B cell (primary cell): ENCODE measurements at regions of chr1 and their contacts with region 1.

Region 1: GRCh38 chr1:30801771-30802198 is 44.2 kb upstream of the LAPTM5 start:
- DNase-seq: peak; percentile 82
- ATAC-seq: peak; percentile 68
- H3K4me3 ChIP-seq: no peak overlapping the region
- H3K4me3 Mint-ChIP-seq: no peak overlapping the region
- H3K27ac ChIP-seq: no peak overlapping the region
- H3K27ac Mint-ChIP-seq: no peak overlapping the region
- H3K4me1 ChIP-seq: peaks cover 10 to 13% of the 10 kb centered on the region in 2 donors
- H3K4me1 Mint-ChIP-seq: peaks cover 14% of the 10 kb centered on the region
- H3K27me3 ChIP-seq: peaks cover 0 to 42% (median 10%) of the 10 kb centered on the region in 4 experiments
- H3K27me3 Mint-ChIP-seq: peaks cover 26% of the 10 kb centered on the region
- CTCF ChIP-seq: peak; percentile 97

Region 2: GRCh38 chr1:30336550-30337323 is 465.0 kb before region 1 on chr1:
- CTCF ChIA-PET with region 1: no interaction called
- POLR2A ChIA-PET with region 1: no interaction called
- intact Hi-C with region 1: no loop called
- DNase-seq: no peak
- ATAC-seq: no peak
- H3K4me3 ChIP-seq: no peak overlapping the region
- H3K4me3 Mint-ChIP-seq: no peak overlapping the region
- H3K27ac ChIP-seq: no peak overlapping the region
- H3K27ac Mint-ChIP-seq: no peak overlapping the region
- H3K4me1 ChIP-seq: no peaks in the 10 kb centered on the region
- H3K4me1 Mint-ChIP-seq: no peaks in the 10 kb centered on the region
- H3K27me3 ChIP-seq: no peaks in the 10 kb centered on the region
- H3K27me3 Mint-ChIP-seq: peaks cover 10% of the 10 kb centered on the region
- CTCF ChIP-seq: no peak

Region 3: DNA sequence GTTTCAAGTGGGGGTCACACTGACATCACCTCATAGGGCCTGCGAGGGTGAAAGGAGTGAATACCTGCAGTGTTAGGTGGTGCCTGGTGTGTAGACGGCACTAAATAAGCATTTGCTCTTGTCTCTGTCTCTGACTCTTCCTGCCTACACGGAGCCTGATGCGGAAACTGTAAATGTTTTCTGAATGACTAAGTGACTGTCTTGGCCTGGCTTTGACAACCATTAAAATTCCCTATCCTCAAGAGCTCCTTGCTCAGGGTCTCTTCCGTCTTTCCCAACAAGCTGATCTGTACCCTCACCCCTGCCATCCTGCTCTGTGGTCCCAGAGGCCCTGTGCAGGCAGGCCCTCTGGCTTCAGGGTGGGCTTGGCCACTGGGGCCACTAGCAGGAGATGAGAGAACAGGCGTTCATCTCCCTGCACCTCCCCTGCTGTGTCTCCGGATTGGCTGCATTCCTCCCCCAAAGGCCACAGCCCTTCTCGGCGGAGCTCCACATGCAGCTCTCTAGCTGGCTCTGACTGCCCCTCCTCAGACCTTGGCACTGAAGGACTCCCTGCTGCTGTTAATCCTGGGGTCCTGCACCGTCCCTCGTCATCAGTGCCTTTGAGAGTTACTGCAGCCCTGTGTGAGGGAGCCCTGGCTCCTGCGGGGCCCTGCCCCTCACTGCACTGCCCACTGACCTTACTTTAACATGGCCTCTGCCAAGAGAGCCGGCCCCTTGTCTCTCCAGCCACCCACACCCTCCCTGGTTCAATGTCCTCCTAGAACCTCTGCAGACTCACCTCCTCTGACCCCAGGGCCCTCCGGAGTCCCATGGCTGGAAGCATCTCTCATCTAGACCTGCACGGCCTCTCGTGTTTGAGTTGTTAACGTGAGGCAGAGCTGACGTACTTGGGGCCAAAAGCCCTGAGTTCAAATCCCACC is 289.5 kb before region 1 on chr1:
- CTCF ChIA-PET with region 1: no interaction called
- POLR2A ChIA-PET with region 1: no interaction called
- intact Hi-C with region 1: no loop called
- DNase-seq: no peak
- ATAC-seq: no peak
- H3K4me3 ChIP-seq: no peak overlapping the region
- H3K4me3 Mint-ChIP-seq: no peak overlapping the region
- H3K27ac ChIP-seq: no peak overlapping the region
- H3K27ac Mint-ChIP-seq: no peak overlapping the region
- H3K4me1 ChIP-seq: no peaks in the 10 kb centered on the region
- H3K4me1 Mint-ChIP-seq: no peaks in the 10 kb centered on the region
- H3K27me3 ChIP-seq: peaks cover 0 to 3% (median 0%) of the 10 kb centered on the region in 4 experiments
- H3K27me3 Mint-ChIP-seq: peaks cover 13% of the 10 kb centered on the region
- CTCF ChIP-seq: no peak

Region 4: GRCh38 chr1:30779294-30780071 is 22.3 kb before region 1 on chr1:
- CTCF ChIA-PET with region 1: interaction called, 74 read pairs
- POLR2A ChIA-PET with region 1: interaction called, 6 read pairs
- intact Hi-C with region 1: no loop called
- DNase-seq: peak; percentile 92
- ATAC-seq: peak; percentile 76
- H3K4me3 ChIP-seq: no peak overlapping the region
- H3K4me3 Mint-ChIP-seq: peak overlapping the region; percentile 53
- H3K27ac ChIP-seq: peak overlapping the region in 1 of 2 donors; percentile 59
- H3K27ac Mint-ChIP-seq: peak overlapping the region; percentile 84
- H3K4me1 ChIP-seq: peaks cover 43 to 56% of the 10 kb centered on the region in 2 donors
- H3K4me1 Mint-ChIP-seq: peaks cover 42% of the 10 kb centered on the region
- H3K27me3 ChIP-seq: peaks cover 0 to 7% (median 0%) of the 10 kb centered on the region in 4 experiments
- H3K27me3 Mint-ChIP-seq: no peaks in the 10 kb centered on the region
- CTCF ChIP-seq: peak; percentile 93

Region 5: GRCh38 chr1:30816211-30817076 is 14.7 kb after region 1 on chr1:
- CTCF ChIA-PET with region 1: interaction called, 20 read pairs
- POLR2A ChIA-PET with region 1: no interaction called
- intact Hi-C with region 1: no loop called
- DNase-seq: no peak
- ATAC-seq: no peak
- H3K4me3 ChIP-seq: no peak overlapping the region
- H3K4me3 Mint-ChIP-seq: no peak overlapping the region
- H3K27ac ChIP-seq: no peak overlapping the region
- H3K27ac Mint-ChIP-seq: no peak overlapping the region
- H3K4me1 ChIP-seq: peaks cover 0 to 3% of the 10 kb centered on the region in 2 donors
- H3K4me1 Mint-ChIP-seq: no peaks in the 10 kb centered on the region
- H3K27me3 ChIP-seq: peaks cover 0 to 63% (median 40%) of the 10 kb centered on the region in 4 experiments
- H3K27me3 Mint-ChIP-seq: peaks cover 56% of the 10 kb centered on the region
- CTCF ChIP-seq: no peak

Region 6: DNA sequence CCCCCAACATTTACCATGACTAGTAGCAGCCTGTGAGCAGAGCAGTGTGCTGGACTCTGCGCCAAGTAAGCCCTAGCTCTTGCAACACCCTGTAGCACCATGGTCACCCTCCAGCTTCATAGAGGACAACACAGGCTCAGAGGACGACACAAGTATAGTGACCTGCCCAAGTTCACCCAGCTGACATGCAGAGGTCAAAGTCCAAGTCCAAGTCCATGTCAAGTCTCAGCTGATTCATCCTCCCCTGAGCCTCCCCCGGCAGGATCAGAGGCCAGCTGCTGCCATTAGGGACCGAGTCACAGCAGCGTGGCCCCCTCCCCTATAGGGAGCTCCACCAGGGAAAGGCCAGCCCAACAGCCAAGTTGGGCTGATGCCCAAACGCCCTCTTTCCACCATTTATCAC is 90.9 kb after region 1 on chr1:
- CTCF ChIA-PET with region 1: interaction called, 11 read pairs
- POLR2A ChIA-PET with region 1: no interaction called
- intact Hi-C with region 1: no loop called
- DNase-seq: no peak
- ATAC-seq: no peak
- H3K4me3 ChIP-seq: no peak overlapping the region
- H3K4me3 Mint-ChIP-seq: no peak overlapping the region
- H3K27ac ChIP-seq: no peak overlapping the region
- H3K27ac Mint-ChIP-seq: no peak overlapping the region
- H3K4me1 ChIP-seq: peaks cover 5 to 12% of the 10 kb centered on the region in 2 donors
- H3K4me1 Mint-ChIP-seq: peaks cover 8% of the 10 kb centered on the region
- H3K27me3 ChIP-seq: peaks cover 0 to 34% (median 15%) of the 10 kb centered on the region in 4 experiments
- H3K27me3 Mint-ChIP-seq: peaks cover 40% of the 10 kb centered on the region
- CTCF ChIP-seq: no peak

Region 7: DNA sequence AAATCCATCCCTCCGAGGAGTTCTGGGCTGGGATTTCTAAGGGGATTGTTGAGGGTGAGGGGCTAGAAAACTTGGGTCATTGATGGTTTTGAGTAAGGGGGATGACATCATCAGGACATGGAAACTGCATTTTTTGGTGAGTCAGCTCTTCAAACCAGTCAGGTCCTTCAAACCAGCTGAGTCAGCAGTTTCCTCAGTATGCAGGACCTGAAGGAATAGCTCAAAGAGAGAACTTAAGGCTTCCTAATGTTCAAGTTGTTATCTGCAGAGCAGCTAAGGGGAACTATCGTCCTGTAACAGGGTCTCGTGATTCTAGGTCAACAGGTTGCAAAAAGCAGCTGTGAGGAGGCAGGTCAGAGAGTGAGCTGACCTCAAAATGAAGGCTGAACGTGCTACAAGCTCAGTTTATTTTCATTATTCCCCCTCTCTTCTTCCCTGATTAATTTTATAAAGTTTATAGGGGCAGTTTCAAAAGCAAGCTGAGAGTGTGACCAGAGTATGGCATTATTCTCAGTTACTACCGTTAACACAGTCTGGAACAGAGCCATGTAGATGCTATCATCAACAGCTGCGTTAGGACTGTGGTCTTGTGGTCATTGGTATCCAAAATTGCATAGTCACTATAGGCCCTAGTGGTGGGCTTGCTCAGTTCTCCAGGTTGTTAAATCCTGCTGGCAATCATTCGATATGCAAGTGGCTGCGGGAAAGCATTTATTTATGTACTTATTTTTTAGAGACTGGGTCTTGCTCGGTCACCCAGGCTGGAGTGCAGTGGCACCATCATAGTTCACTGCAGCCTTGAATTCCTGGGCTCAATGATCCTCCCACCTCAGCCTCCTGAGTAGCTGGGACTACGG is 117.5 kb after region 1 on chr1:
- CTCF ChIA-PET with region 1: interaction called, 337 read pairs
- POLR2A ChIA-PET with region 1: no interaction called
- intact Hi-C with region 1: no loop called
- DNase-seq: no peak
- ATAC-seq: no peak
- H3K4me3 ChIP-seq: no peak overlapping the region
- H3K4me3 Mint-ChIP-seq: no peak overlapping the region
- H3K27ac ChIP-seq: no peak overlapping the region
- H3K27ac Mint-ChIP-seq: no peak overlapping the region
- H3K4me1 ChIP-seq: no peaks in the 10 kb centered on the region
- H3K4me1 Mint-ChIP-seq: no peaks in the 10 kb centered on the region
- H3K27me3 ChIP-seq: peaks cover 0 to 4% (median 0%) of the 10 kb centered on the region in 4 experiments
- H3K27me3 Mint-ChIP-seq: peaks cover 18% of the 10 kb centered on the region
- CTCF ChIP-seq: no peak

Region 8: DNA sequence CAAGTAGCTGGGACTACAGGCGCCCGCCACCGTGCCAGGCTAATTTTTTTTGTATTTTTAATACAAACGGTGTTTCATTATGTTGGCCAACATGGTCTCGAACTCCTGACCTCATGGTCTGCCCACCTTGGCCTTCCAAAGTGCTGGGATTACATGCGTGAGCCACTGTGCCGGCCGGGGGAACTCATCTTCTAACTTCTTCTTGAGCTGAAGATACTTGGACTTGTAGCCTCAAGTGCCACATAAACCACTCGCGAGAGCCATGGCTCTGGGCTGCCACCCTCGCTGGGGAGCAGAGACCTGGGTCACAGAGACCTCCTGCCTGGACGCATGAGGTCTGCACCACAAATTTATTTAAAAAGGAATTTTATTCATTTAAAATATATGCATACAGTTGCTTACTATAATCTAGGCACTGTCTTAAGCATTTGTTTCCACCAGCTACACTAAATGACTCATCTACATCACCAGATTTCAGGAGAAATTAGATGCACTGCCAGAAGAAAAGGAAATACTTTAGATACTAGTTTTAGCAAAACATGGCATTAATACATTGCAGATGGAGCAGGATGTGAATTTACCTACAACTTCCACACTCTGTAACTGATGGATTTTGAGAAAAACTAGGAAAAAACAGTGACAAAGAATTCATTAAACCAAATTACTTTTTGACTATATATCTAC is 293.7 kb after region 1 on chr1:
- CTCF ChIA-PET with region 1: no interaction called
- POLR2A ChIA-PET with region 1: no interaction called
- intact Hi-C with region 1: no loop called
- DNase-seq: no peak
- ATAC-seq: no peak
- H3K4me3 ChIP-seq: no peak overlapping the region
- H3K4me3 Mint-ChIP-seq: no peak overlapping the region
- H3K27ac ChIP-seq: no peak overlapping the region
- H3K27ac Mint-ChIP-seq: no peak overlapping the region
- H3K4me1 ChIP-seq: no peaks in the 10 kb centered on the region
- H3K4me1 Mint-ChIP-seq: no peaks in the 10 kb centered on the region
- H3K27me3 ChIP-seq: no peaks in the 10 kb centered on the region
- H3K27me3 Mint-ChIP-seq: no peaks in the 10 kb centered on the region
- CTCF ChIP-seq: no peak